HCT116 (cell line): ENCODE measurements at regions of chr9 and their contacts with region 1.

Region 1: DNA sequence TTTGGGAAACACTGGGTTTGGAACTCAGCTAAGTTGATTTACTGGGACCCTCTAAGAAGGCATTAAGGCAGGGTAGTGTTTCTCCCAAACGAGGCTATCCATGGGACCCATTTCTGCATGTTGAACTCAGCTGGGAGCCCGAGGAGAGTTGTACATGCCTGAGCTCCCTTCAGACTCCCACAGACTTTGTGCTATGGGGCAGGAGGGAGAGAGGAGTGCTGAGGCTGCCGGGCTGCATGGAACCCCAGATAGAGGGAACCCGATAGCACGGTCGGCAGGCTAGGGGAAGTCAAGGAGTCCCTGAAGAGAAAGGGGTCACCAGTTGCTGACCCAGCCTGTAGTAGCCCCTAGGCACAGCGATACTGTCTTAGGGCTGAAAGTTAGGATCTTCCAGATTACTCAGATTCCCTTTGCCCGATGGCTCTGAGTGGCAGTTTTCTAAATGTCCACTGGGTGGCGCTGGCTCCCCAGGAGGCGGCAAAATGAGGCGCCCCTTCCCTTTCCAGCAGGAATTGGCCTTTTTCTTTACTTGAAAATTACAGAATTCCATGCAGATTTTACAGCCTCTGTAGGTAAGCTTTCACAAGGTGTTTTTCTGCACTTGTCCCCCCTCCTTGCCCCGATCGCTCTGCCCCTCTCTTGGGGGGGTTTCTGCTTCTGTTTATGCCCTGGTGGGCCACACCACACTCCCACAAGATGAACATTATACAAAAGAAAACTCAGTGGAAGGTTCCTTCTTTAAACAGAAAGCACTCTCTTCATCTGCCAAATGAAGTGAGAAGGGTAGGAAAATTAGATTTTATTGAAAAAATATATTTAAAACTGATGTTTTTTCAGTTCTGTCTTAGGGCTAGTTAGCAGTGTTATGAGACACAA is 17.8 kb downstream of the NANS start:
- DNase-seq: no peak
- ATAC-seq: peak; percentile 69
- H3K4me3 ChIP-seq: no peak overlapping the region
- H3K27ac ChIP-seq: 0 out of 2 replicates have a peak overlapping the region, but pooled peaks have one; percentile 12
- H3K4me1 ChIP-seq: peaks cover 0 to 18% of the 10 kb centered on the region in 2 experiments; a peak in 3 of 4 replicates
- H3K27me3 ChIP-seq: no peaks in the 10 kb centered on the region
- CTCF ChIP-seq: peak; percentile 81 to 97 (median 91)
- POLR2A ChIP-seq: no peak
- RAD21 ChIP-seq: peak; percentile 85

Region 2: GRCh38 chr9:98215821-98216220 is 141.5 kb after region 1 on chr9:
- CTCF ChIA-PET with region 1: no interaction called
- POLR2A ChIA-PET with region 1: no interaction called
- RAD21 ChIA-PET with region 1: no interaction called
- intact Hi-C with region 1: loop called (anchors 10 kb)
- DNase-seq: no peak
- ATAC-seq: peak; percentile 87
- H3K4me3 ChIP-seq: no peak overlapping the region
- H3K27ac ChIP-seq: no peak overlapping the region
- H3K4me1 ChIP-seq: peaks cover 3 to 12% of the 10 kb centered on the region in 2 experiments; a peak in 2 of 4 replicates
- H3K27me3 ChIP-seq: no peaks in the 10 kb centered on the region
- CTCF ChIP-seq: peak; percentile 33 to 70 (median 60); a peak in 5 of 6 replicates
- POLR2A ChIP-seq: no peak
- RAD21 ChIP-seq: peak; percentile 50

Region 3: GRCh38 chr9:98263482-98264357 is 189.4 kb after region 1 on chr9:
- CTCF ChIA-PET with region 1: interaction called, 12 read pairs
- POLR2A ChIA-PET with region 1: no interaction called
- RAD21 ChIA-PET with region 1: interaction called in 1 of 2 experiments, 3 read pairs
- intact Hi-C with region 1: loop called (anchors 1 kb)
- DNase-seq: peak; percentile 69
- ATAC-seq: peak; percentile 100
- H3K4me3 ChIP-seq: no peak overlapping the region
- H3K27ac ChIP-seq: no peak overlapping the region
- H3K4me1 ChIP-seq: no peaks in the 10 kb centered on the region
- H3K27me3 ChIP-seq: no peaks in the 10 kb centered on the region
- CTCF ChIP-seq: peak; percentile 92 to 96 (median 96)
- POLR2A ChIP-seq: no peak
- RAD21 ChIP-seq: peak; percentile 98

Region 4: GRCh38 chr9:98374385-98375051 is 300.2 kb after region 1 on chr9:
- CTCF ChIA-PET with region 1: no interaction called
- POLR2A ChIA-PET with region 1: no interaction called
- RAD21 ChIA-PET with region 1: no interaction called
- intact Hi-C with region 1: no loop called
- DNase-seq: no peak
- ATAC-seq: no peak
- H3K4me3 ChIP-seq: no peak overlapping the region
- H3K27ac ChIP-seq: no peak overlapping the region
- H3K4me1 ChIP-seq: peaks cover 0 to 8% of the 10 kb centered on the region in 2 experiments; a peak in 2 of 4 replicates
- H3K27me3 ChIP-seq: no peaks in the 10 kb centered on the region
- CTCF ChIP-seq: no peak
- POLR2A ChIP-seq: no peak
- RAD21 ChIP-seq: no peak